PC-3 (cell line): ENCODE measurements at regions of chr1 and their contacts with region 1.

Region 1: DNA sequence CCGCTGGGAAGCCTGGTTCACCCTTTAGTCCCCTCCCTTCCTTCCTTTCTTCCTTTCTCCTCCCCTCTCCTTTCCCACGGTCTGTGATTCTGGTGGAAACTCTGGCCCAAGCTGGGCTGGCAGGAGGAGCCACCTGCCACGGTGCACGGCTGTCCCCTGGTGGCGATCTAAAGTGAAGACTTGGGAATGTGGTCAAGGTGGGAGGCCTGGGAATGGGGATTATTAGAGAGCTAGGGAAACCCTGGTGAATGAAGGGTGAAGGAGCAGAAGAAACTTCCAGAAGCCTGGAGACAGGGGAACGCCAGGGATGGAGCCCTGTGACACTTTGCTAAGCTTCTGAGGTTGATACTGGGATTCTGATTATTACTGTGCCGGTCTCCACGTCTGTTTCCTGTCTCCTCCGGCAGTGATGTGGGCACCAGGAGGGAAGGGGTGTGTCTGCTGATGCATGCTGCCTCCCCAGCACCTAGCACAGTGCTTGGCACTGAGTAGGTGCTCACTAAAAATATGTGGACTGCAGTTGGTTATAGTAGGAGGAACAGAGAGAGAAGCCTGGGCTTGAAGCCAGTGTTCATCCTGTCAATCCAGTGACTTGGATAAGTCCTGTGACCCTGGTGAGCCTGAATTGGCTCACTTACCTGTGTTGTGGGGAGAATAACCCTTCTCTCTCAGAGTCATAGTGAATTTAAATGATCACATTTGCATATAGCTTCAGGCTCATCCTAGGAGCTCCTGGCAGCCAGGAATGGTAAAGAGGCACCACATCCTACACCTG is 71.2 kb upstream of the NBPF3 start:
- DNase-seq: peak; percentile 88
- ATAC-seq: peak; percentile 95
- H3K4me3 ChIP-seq: no peak overlapping the region
- H3K27ac ChIP-seq: no peak overlapping the region
- H3K4me1 ChIP-seq: no peaks in the 10 kb centered on the region
- H3K27me3 ChIP-seq: no peaks in the 10 kb centered on the region
- CTCF ChIP-seq: peak; percentile 99

Region 2: GRCh38 chr1:21176586-21177555 is 191.8 kb before region 1 on chr1 and contains the start of gene EIF4G3:
- CTCF ChIA-PET with region 1: no interaction called
- POLR2A ChIA-PET with region 1: no interaction called
- intact Hi-C with region 1: no loop called
- DNase-seq: peak; percentile 99
- ATAC-seq: peak; percentile 97
- H3K4me3 ChIP-seq: peak within 1 kb of the TSS; percentile 91
- H3K27ac ChIP-seq: no peak within 1 kb of the TSS; the same call in 1 of the 2 replicates
- H3K4me1 ChIP-seq: peaks cover 13% of the 10 kb centered on the region
- H3K27me3 ChIP-seq: no peaks in the 10 kb centered on the region
- CTCF ChIP-seq: no peak
- total RNA-seq, gene EIF4G3: 16.9 and 25.0 TPM in 2 replicates

Region 3: DNA sequence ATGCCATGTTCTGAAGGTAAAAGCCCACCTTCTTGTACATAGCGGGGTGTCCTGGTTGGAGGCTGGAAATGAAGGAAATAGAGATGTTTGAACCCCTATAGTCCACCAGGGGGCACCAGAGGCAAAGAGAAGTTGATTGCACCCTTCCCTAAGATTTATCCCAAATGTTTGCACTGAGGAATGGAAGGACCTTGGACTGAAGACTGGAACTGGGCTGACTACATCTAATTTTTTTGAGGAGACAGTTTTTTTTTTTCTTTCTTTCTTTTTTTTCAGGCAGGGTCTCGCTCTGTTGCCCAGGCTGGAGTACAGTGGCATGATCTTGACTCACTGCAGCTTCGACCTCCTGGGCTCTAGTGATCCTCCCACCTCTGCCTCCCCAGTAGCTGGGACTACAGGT is 136.7 kb before region 1 on chr1:
- CTCF ChIA-PET with region 1: interaction called, 12 read pairs
- POLR2A ChIA-PET with region 1: no interaction called
- intact Hi-C with region 1: loop called (anchors 1 kb)
- DNase-seq: peak; percentile 74
- ATAC-seq: peak; percentile 70
- H3K4me3 ChIP-seq: no peak overlapping the region
- H3K27ac ChIP-seq: peak overlapping the region; percentile 59
- H3K4me1 ChIP-seq: peaks cover 39% of the 10 kb centered on the region
- H3K27me3 ChIP-seq: no peaks in the 10 kb centered on the region
- CTCF ChIP-seq: peak; percentile 88

Region 4: DNA sequence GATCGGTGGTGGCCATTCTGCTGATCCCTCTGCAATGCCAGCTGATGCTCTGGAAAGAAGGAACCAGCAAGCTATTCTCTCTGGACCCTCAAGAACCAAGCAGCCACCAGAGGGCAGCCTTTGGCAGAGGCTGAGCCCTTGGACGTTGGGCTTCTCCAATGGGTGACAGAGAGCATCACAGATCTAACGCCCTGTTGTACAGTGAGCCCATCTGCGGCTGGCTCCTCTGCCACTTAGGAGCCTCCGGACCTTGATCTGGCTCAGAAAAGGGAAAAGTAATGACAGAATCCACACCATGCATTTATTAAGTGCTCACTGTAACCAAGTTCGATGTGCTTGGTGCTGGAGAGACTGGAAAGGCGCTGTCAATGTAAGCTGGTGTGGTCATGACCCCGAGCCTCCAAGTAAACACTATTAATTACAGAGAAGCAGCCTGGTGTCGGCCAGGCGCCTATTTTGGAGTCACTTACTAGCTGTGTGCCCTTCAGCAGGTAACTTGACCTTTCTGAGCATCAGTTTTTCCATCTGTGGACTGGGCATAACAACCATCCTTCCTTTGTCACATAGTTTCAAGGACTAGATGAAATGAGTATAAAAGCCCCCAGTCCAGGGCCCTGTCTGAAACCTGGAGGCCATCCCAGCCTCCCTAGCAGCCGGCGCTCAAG is 113.3 kb before region 1 on chr1:
- CTCF ChIA-PET with region 1: interaction called, 35 read pairs
- POLR2A ChIA-PET with region 1: no interaction called
- intact Hi-C with region 1: loop called (anchors 1 kb)
- DNase-seq: peak; percentile 92
- ATAC-seq: peak; percentile 60
- H3K4me3 ChIP-seq: no peak overlapping the region
- H3K27ac ChIP-seq: no peak overlapping the region
- H3K4me1 ChIP-seq: peaks cover 21% of the 10 kb centered on the region
- H3K27me3 ChIP-seq: no peaks in the 10 kb centered on the region
- CTCF ChIP-seq: peak; percentile 89

Region 5: GRCh38 chr1:21355956-21356355 is 12.7 kb before region 1 on chr1:
- CTCF ChIA-PET with region 1: no interaction called
- POLR2A ChIA-PET with region 1: no interaction called
- intact Hi-C with region 1: no loop called
- DNase-seq: no peak
- ATAC-seq: peak; percentile 46
- H3K4me3 ChIP-seq: no peak overlapping the region
- H3K27ac ChIP-seq: no peak overlapping the region
- H3K4me1 ChIP-seq: no peaks in the 10 kb centered on the region
- H3K27me3 ChIP-seq: no peaks in the 10 kb centered on the region
- CTCF ChIP-seq: no peak

Region 6: DNA sequence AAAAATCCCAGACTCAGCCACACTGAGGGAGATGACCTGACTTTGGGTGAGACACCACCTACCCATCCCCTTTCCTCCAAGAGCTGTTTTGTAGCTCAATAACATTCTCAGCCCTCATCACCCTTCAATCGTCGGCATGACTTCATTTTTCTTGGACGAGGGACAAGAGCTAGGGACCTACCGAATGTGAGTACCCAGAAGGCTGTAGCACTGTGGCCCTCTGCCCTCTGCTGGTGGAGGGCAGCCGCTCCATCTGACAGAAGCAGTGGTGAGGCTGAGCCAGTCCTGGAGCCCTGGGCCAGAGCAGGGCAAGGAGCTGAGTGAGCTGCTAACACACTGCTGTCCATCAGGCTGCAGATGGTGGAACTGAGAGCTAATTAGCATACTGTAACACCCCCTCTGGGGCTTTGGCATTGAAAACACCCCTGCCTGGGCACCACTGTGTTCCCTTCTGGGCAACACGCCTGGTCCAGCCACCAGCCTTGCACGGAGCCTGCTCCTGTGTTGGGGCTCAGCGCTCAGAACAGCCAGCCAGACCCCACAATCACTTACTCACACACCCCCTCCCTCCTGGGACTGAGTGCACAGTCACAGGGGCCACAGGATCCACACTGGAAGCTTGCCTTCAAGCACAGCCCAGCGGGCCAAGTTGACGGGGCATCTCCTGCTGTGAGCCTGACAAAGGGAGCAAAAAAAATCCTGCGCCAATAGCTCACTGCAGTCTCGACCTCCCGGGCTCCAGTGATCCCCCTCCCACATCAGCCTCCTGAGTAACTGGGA is 122.3 kb after region 1 on chr1:
- CTCF ChIA-PET with region 1: interaction called, 24 read pairs
- POLR2A ChIA-PET with region 1: no interaction called
- intact Hi-C with region 1: loop called (anchors 2 kb)
- DNase-seq: peak; percentile 78
- ATAC-seq: peak; percentile 87
- H3K4me3 ChIP-seq: no peak overlapping the region
- H3K27ac ChIP-seq: no peak overlapping the region
- H3K4me1 ChIP-seq: no peaks in the 10 kb centered on the region
- H3K27me3 ChIP-seq: no peaks in the 10 kb centered on the region
- CTCF ChIP-seq: peak; percentile 82

Region 7: DNA sequence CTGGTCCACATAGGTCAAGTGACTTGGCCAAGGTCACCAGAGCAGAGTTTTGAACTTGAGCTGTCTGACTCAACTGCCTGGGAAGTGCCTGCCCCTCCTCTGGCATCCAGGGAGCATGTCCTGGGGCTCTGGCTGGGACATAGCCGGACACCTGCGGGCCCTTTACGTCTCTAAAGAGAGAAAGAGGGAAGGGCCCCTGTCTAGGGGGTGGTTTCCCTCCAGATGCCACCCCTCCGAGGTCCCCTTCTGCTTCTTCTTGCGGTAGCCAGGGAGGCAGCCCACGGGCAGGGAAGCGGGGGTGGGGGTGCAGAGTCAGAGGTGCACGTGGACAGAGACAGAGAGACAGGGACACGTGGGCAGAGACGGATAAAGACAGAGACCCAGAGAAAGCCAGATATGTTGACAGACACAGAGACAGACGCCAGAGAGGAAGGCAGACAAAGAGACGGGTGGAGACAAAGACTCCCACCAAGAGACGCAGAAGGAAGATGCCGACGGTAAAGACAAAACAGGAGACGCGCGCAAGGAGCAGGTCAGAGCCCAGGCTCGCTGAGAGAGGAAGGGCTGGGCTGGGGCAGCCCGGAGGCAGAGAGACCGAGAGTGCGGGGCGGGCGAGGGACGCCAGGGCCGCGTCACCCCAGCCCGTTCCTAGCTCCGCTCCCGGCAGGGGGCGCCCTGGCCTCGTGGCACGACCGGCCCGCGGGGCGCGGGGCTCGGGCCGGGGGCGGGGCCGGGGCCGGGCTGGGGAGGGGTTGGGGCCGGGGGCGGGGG is 140.1 kb after region 1 on chr1:
- CTCF ChIA-PET with region 1: interaction called, 10 read pairs
- POLR2A ChIA-PET with region 1: no interaction called
- intact Hi-C with region 1: no loop called
- DNase-seq: peak; percentile 63
- ATAC-seq: peak; percentile 92
- H3K4me3 ChIP-seq: peak overlapping the region; percentile 55
- H3K27ac ChIP-seq: no peak overlapping the region
- H3K4me1 ChIP-seq: peaks cover 4% of the 10 kb centered on the region; the same call in 1 of the 2 replicates
- H3K27me3 ChIP-seq: peaks cover 15% of the 10 kb centered on the region; the same call in 1 of the 2 replicates
- CTCF ChIP-seq: peak; percentile 49

Region 8: GRCh38 chr1:21534674-21535378 is 166.1 kb after region 1 on chr1:
- CTCF ChIA-PET with region 1: interaction called, 9 read pairs
- POLR2A ChIA-PET with region 1: no interaction called
- intact Hi-C with region 1: loop called (anchors 1 kb)
- DNase-seq: peak; percentile 73
- ATAC-seq: peak; percentile 88
- H3K4me3 ChIP-seq: no peak overlapping the region
- H3K27ac ChIP-seq: no peak overlapping the region
- H3K4me1 ChIP-seq: no peaks in the 10 kb centered on the region
- H3K27me3 ChIP-seq: peaks cover 12% of the 10 kb centered on the region
- CTCF ChIP-seq: peak; percentile 76

Region 9: DNA sequence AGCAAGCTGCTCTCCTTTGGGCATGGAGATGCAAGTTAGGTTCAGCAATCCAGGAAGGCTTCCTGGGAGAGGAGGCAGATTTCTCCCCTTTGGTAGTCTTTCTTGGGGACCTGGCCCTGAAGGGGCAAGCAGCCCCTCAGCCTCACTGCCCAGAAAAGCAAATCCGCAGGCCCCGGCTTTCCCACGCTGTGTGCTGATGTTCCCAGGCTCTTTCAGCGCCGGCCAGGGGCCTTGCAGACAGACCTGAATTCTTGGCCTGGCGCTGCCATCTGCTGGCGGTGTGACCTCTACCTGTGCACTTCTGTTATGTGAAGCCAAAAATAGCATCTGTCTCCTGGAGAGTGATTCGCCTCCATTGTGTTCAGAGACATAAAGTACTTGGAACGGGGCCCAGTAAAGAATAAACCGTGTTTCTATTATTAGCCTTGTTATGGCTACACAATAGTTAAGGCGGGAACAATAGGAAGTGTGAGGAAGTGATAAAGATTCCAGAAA is 205.3 kb after region 1 on chr1:
- CTCF ChIA-PET with region 1: no interaction called
- POLR2A ChIA-PET with region 1: no interaction called
- intact Hi-C with region 1: no loop called
- DNase-seq: peak; percentile 79
- ATAC-seq: peak; percentile 91
- H3K4me3 ChIP-seq: no peak overlapping the region
- H3K27ac ChIP-seq: no peak overlapping the region
- H3K4me1 ChIP-seq: no peaks in the 10 kb centered on the region
- H3K27me3 ChIP-seq: no peaks in the 10 kb centered on the region
- CTCF ChIP-seq: peak; percentile 83

Region 10: GRCh38 chr1:21659099-21659923 is 290.6 kb after region 1 on chr1:
- CTCF ChIA-PET with region 1: no interaction called
- POLR2A ChIA-PET with region 1: no interaction called
- intact Hi-C with region 1: loop called (anchors 2 kb)
- DNase-seq: peak; percentile 69
- ATAC-seq: peak; percentile 74
- H3K4me3 ChIP-seq: peak overlapping the region; percentile 47; the same call in 1 of the 2 replicates
- H3K27ac ChIP-seq: no peak overlapping the region
- H3K4me1 ChIP-seq: 0 out of 2 replicates have a peak, but pooled peaks cover 3% of the 10 kb centered on the region
- H3K27me3 ChIP-seq: 0 out of 2 replicates have a peak, but pooled peaks cover 6% of the 10 kb centered on the region
- CTCF ChIP-seq: peak; percentile 75